Mucosa of descending colon (tissue), 3 donors: ENCODE measurements at regions of chr5 and their contacts with region 1.

Region 1: DNA sequence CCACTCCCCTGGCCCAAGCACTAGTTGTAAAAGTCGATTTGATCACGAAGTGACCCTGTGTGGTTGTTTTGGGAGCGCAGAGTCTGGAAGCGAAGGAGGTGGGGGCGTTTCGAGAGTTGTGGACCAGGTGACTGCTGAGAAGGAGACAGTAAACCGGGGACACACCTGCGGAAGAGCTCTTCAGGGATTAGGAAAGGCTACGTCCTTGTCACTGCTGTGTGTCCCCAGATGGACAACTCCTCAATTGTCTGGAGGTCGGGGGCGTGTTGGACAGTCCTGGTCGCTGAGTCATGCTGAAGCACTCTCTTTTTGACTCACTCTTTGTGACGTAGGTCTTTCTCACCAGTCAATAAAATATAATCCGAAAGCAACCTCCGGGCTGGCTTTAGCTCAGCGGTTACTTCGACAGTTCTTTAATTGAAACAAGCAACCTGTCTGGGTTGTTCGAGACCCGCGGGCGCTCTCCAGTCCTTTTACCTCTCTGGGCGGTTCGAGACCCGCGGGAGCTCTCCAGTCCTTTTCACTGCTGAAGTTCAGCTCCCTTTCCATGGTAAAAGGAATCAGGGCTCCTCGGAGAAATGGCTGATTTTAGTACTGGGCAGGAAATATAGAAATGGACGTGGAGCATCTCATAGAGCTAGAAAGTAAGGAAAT is 10.8 kb downstream of the ZMAT2 start:
- DNase-seq: peak; percentile 88 to 92 (median 88)
- ATAC-seq: peak; percentile 92
- H3K4me3 ChIP-seq: peak overlapping the region; percentile 23
- H3K4me1 ChIP-seq: no peaks in the 10 kb centered on the region
- CTCF ChIP-seq: peak; percentile 2

Region 2: GRCh38 chr5:140362860-140363630 is 348.0 kb before region 1 on chr5:
- intact Hi-C with region 1: loop called in 1 of 2 experiments (anchors 10 kb)
- DNase-seq: peak; percentile 84 to 92 (median 91)
- ATAC-seq: peak; percentile 87
- H3K4me3 ChIP-seq: no peak overlapping the region
- H3K4me1 ChIP-seq: peaks cover 13% of the 10 kb centered on the region
- CTCF ChIP-seq: peak; percentile 93

Region 3: GRCh38 chr5:141084487-141084990 is 373.5 kb after region 1 on chr5:
- intact Hi-C with region 1: no loop called
- DNase-seq: peak in 1 of 3 donors; percentile 3
- ATAC-seq: no peak
- H3K4me3 ChIP-seq: no peak overlapping the region
- H3K4me1 ChIP-seq: no peaks in the 10 kb centered on the region
- CTCF ChIP-seq: no peak